ENCODE measurements at regions of chr2 and their contacts with region 1.

Region 1: GRCh38 chr2:190961918-190962487 is 52.0 kb downstream of the STAT1 start:
- DNase-seq: no peak

Region 2: GRCh38 chr2:190940454-190940853 is 21.5 kb before region 1 on chr2:
- intact Hi-C with region 1: no loop called
- DNase-seq: no peak

Region 3: GRCh38 chr2:190987116-190987515 is 25.1 kb after region 1 on chr2:
- intact Hi-C with region 1: loop called in 1 of 2 experiments (anchors 1 kb)
- DNase-seq: no peak

Region 4: DNA sequence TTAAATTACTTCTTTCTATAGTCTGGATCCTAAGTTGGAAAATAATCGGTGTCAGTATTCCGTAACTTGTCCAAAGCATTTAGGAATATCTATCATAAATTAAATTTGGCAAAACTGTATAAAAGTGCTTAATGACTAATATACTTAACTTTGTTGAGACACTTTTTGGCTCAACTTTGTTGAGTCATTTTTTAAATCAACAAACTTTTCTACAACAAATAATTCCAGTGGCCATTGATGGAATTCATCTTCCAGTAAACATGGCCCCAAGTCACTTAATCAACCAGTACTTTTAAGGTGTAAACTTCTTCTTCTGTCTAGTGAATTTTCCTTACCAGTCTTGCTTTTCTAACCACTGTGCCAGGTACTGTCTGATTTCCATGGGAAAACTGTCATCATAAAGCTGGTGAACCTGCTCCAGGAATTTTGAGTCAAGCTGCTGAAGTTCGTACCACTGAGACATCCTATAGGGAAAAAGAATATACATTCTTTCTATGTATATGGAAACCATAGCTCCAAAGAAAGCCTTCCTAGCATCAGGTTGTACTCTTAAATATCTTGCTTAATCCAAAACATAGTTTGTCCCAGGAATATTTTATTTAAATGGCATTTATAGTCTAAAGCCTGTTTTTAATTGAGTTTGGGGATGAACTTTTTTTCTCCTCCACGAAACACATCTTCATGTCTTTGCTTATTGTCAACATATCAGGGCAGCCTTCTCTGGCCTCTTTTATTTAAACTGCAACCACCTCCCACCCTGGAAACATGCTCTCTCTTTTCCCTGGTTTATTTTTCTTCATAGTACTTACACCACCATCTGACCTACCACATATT is 47.8 kb after region 1 on chr2:
- intact Hi-C with region 1: loop called in 1 of 2 experiments (anchors 2 kb)
- DNase-seq: no peak

Region 5: GRCh38 chr2:191066197-191066918 is 104.4 kb after region 1 on chr2:
- intact Hi-C with region 1: no loop called
- DNase-seq: no peak